Endothelial cell of umbilical vein (primary cell): ENCODE measurements at regions of chr12 and their contacts with region 1.

Region 1: GRCh38 chr12:79058331-79058730 is 193.8 kb downstream of the SYT1 start:
- DNase-seq: peak; percentile 85
- H3K4me3 ChIP-seq: no peak overlapping the region
- H3K27ac ChIP-seq: peak overlapping the region; percentile 85
- H3K4me1 ChIP-seq: peaks cover 61% of the 10 kb centered on the region
- H3K27me3 ChIP-seq: no peaks in the 10 kb centered on the region
- CTCF ChIP-seq: no peak
- POLR2A ChIP-seq: no peak

Region 2: GRCh38 chr12:77847060-77847541 is 1211.2 kb before region 1 on chr12:
- CTCF ChIA-PET with region 1: no interaction called
- POLR2A ChIA-PET with region 1: no interaction called
- dilution Hi-C with region 1: no loop called
- intact Hi-C with region 1: loop called (anchors 10 kb)
- DNase-seq: peak; percentile 40
- H3K4me3 ChIP-seq: no peak overlapping the region
- H3K27ac ChIP-seq: peak overlapping the region; percentile 78
- H3K4me1 ChIP-seq: peaks cover 44% of the 10 kb centered on the region
- H3K27me3 ChIP-seq: no peaks in the 10 kb centered on the region
- CTCF ChIP-seq: no peak
- POLR2A ChIP-seq: no peak

Region 3: DNA sequence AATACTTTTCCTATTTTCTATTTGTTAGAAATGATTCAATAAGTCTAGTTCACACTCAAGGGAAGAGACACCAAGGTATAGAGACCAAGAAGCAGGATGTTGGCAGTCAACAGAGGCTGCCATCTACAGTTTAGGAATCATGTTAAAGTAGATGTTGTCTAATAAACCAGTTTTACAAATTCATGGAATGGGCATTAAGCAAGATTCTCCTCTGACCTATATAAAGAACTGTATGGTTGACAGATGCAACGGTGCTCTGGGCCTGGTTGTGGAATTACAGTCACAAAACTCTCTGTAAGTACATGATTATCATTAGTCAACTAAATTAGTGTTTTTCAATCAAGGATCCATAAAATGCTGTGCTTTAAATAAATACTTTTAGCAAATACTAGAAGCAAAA is 752.5 kb before region 1 on chr12:
- CTCF ChIA-PET with region 1: no interaction called
- POLR2A ChIA-PET with region 1: no interaction called
- dilution Hi-C with region 1: no loop called
- intact Hi-C with region 1: no loop called
- DNase-seq: no peak
- H3K4me3 ChIP-seq: no peak overlapping the region
- H3K27ac ChIP-seq: no peak overlapping the region
- H3K4me1 ChIP-seq: no peaks in the 10 kb centered on the region
- H3K27me3 ChIP-seq: no peaks in the 10 kb centered on the region
- CTCF ChIP-seq: no peak
- POLR2A ChIP-seq: no peak

Region 4: DNA sequence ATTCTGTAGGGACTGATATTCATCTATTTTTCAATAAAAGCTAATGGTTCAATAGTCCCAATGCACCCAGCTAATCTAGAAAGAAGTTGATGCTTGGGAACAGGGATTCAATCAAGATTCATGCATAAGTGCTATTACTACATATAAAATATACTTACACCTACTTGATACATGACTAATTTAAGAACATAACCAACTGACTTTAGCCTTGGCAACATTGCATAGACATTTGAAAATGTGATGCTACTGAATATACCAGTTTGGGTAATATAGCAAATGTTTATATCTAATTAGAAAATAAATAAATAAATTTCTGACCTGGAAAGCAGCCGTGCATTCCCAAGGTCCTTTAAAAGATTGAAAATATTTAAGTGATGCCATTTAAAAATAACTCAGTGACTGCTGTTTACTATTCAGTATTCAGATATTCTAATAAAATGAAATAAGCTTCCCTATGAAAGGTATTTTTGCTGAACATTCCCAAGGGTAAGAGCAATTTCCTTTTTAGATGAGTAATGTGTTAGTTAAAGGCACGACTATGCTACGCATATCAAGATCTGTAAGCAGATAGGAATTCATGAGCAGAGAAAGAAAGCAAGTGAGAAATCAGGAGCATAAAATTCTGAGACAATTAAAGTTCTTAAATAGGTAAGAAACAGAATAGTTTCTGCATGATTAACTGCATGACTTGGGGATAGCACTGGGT is 354.4 kb before region 1 on chr12:
- CTCF ChIA-PET with region 1: no interaction called
- POLR2A ChIA-PET with region 1: no interaction called
- dilution Hi-C with region 1: no loop called
- intact Hi-C with region 1: loop called (anchors 5 kb)
- DNase-seq: peak; percentile 89
- H3K4me3 ChIP-seq: no peak overlapping the region
- H3K27ac ChIP-seq: peak overlapping the region; percentile 96
- H3K4me1 ChIP-seq: peaks cover 21% of the 10 kb centered on the region
- H3K27me3 ChIP-seq: no peaks in the 10 kb centered on the region
- CTCF ChIP-seq: no peak
- POLR2A ChIP-seq: no peak

Region 5: DNA sequence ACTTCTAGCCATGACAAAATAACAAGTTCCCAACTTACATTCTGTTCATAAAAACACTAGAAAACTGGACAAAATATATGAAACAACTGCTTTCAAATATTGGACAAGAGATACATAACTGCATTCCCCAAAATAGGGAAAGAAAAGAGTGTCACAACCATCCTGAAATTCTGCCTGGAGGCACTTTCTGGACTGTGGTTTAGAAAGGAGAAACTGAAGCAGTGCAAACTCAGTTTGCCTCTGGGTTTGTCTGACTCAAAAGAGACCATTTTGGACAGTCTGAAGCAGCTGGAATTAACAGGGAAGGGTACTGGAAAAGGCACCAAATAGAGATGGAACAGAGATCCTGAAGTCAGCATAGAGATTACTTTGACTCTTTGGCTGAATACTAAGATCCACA is 205.1 kb before region 1 on chr12:
- CTCF ChIA-PET with region 1: no interaction called
- POLR2A ChIA-PET with region 1: no interaction called
- dilution Hi-C with region 1: no loop called
- intact Hi-C with region 1: no loop called
- DNase-seq: no peak
- H3K4me3 ChIP-seq: no peak overlapping the region
- H3K27ac ChIP-seq: no peak overlapping the region
- H3K4me1 ChIP-seq: no peaks in the 10 kb centered on the region
- H3K27me3 ChIP-seq: no peaks in the 10 kb centered on the region
- CTCF ChIP-seq: no peak
- POLR2A ChIP-seq: no peak

Region 6: DNA sequence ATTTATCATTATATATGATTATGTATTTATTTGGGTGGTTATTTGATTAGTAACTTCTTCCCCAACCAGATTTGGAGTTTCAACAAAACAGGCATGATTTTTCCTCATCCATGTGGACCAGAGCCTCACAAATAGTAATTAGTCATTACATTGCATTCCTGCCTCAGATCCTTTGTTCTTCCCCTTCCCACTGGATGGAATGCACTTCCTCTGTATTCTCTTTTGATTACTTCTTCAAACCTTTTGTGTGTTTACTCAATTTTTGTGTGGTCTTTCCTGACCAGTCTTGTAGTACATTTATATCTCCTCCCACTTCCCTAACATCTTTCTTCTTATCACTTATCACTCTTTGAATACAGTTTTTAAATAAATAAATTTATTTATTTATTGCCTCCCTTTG is 178.3 kb before region 1 on chr12:
- CTCF ChIA-PET with region 1: no interaction called
- POLR2A ChIA-PET with region 1: no interaction called
- dilution Hi-C with region 1: no loop called
- intact Hi-C with region 1: loop called (anchors 2 kb)
- DNase-seq: peak; percentile 28
- H3K4me3 ChIP-seq: no peak overlapping the region
- H3K27ac ChIP-seq: peak overlapping the region; percentile 32
- H3K4me1 ChIP-seq: peaks cover 16% of the 10 kb centered on the region
- H3K27me3 ChIP-seq: no peaks in the 10 kb centered on the region
- CTCF ChIP-seq: no peak
- POLR2A ChIP-seq: no peak

Region 7: DNA sequence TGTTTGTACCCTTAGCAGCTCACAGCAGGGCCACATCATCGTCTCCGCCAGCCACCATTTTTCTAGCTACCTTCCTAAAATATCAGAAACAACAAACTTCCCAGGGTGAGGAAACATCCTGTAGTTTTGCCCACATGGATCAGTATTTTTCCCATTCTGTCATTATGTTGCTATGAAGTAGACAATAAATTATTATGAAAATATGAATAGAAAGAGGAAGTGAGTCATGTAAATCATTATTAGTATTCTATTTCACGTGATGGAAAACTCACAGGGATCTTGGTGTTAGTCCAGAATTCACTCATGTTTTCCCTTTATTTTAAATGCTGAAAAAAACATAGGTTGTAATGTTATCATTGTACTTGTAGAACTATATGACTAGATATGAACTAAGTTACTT is 125.6 kb after region 1 on chr12:
- CTCF ChIA-PET with region 1: no interaction called
- POLR2A ChIA-PET with region 1: no interaction called
- dilution Hi-C with region 1: no loop called
- intact Hi-C with region 1: loop called (anchors 2 kb)
- DNase-seq: peak; percentile 98
- H3K4me3 ChIP-seq: no peak overlapping the region
- H3K27ac ChIP-seq: peak overlapping the region; percentile 99
- H3K4me1 ChIP-seq: peaks cover 19% of the 10 kb centered on the region
- H3K27me3 ChIP-seq: no peaks in the 10 kb centered on the region
- CTCF ChIP-seq: no peak
- POLR2A ChIP-seq: no peak